ENCODE measurements at regions of chr17 and their contacts with region 1.

Region 1: DNA sequence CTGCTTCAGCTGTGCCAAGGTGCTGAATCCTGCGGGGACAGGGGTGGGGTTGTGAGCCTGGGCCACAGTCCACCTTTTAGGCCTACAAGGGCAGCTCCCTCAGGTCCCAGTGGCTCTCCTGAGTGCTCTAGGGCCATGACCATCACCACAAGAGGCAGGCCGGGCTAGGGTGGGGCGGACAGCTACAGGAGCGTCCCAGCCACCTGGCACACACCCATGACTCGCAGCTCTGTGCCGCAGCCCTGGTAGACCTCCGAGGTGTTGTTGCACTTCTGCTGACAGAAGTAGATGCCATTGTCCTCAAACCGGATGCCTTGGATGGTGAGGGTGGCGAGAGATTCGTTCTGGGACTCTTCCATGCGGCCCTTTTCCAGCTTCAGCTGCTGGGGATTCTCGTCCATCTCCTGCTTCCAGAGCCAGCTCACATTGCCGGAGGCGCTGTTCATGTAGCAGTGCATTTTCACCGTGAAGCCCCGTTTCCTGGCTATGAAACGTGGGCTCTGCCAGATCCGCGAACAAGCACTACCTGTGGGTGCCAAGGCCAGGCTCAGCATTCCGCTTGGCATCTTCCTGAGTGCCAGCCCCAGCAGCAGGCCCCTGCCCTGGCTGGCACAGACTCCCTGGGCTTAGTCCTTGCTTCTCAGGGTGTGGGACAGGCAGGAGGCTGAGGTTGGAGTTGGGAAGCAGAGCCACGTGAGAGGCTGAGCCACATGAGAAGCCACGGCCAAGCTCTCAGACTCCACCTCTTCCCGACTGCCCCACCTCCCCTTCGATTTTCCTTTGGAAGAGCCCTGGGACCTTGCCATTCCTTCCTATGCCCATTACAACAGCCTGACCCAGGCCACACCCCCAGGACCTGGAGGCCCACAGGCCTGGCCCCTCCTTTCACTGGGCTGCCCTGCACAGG is 2.0 kb downstream of the CD79B start:
- DNase-seq: peak in 1 of 4 donors; percentile 60
- ATAC-seq: peak; percentile 30
- H3K4me3 ChIP-seq: no peak overlapping the region
- H3K27ac ChIP-seq: no peak overlapping the region
- H3K4me1 ChIP-seq: peaks cover 0 to 19% of the 10 kb centered on the region in 2 donors
- H3K27me3 ChIP-seq: no peaks in the 10 kb centered on the region
- CTCF ChIP-seq: no peak

Region 2: GRCh38 chr17:63834431-63835166 is 95.5 kb before region 1 on chr17:
- intact Hi-C with region 1: no loop called
- DNase-seq: peak in 2 of 4 donors; percentile 48 to 49
- ATAC-seq: peak; percentile 64
- H3K4me3 ChIP-seq: no peak overlapping the region
- H3K27ac ChIP-seq: peak overlapping the region in 1 of 2 donors; percentile 45
- H3K4me1 ChIP-seq: peaks cover 16 to 44% of the 10 kb centered on the region in 2 donors
- H3K27me3 ChIP-seq: no peaks in the 10 kb centered on the region
- CTCF ChIP-seq: peak; percentile 38 to 45

Region 3: DNA sequence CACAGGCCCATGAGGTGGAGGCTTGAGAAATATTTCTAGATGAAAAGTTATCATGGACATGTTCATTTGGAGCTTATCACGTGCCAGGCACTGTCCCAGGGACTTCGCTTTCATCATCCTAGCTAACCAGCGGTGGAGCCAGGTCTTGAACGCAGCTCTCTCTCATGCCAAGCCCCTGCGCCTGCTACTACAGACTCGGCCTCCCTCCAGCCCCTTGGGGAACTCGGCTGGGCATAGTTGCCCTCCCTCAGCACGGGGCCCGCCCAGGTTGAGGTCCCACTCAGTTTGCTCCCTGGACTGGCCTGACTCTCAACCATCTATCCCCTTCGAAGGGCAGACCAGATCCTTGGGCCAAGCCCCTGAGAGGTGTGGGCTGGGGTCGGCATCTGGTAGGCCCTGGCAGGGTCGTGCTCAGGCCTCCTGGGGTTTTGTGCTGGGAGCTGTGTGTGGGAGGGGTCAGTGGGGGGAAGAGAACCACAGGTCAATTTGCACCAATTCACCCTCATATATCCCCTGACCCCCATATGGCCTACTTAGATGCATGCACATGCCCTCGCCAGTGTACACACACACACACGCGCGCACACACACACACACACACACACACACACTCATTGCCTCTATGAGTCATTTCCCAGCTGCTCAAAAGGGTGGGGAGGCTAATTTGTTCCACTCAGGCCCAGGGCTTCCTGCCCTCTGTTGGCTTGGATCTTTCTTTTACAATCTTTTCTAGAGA is 54.7 kb after region 1 on chr17:
- intact Hi-C with region 1: loop called in 1 of 2 experiments (anchors 10 kb)
- DNase-seq: peak in 2 of 4 donors; percentile 61 to 80
- ATAC-seq: peak; percentile 88
- H3K4me3 ChIP-seq: no peak overlapping the region
- H3K27ac ChIP-seq: peak overlapping the region; percentile 68 to 77
- H3K4me1 ChIP-seq: peaks cover 31 to 45% of the 10 kb centered on the region in 2 donors
- H3K27me3 ChIP-seq: no peaks in the 10 kb centered on the region
- CTCF ChIP-seq: no peak

Measured in left lung (tissue), 14 donors.